ENCODE measurements at regions of chr2 and their contacts with region 1.

Region 1: GRCh38 chr2:85266146-85267041 is 61.4 kb downstream of the TGOLN2 start:
- DNase-seq: peak; percentile 85
- H3K4me3 Mint-ChIP-seq: no peak overlapping the region
- H3K27ac Mint-ChIP-seq: no peak overlapping the region
- H3K4me1 Mint-ChIP-seq: peaks cover 9% of the 10 kb centered on the region
- H3K27me3 Mint-ChIP-seq: no peaks in the 10 kb centered on the region
- CTCF ChIP-seq: peak; percentile 96

Region 2: DNA sequence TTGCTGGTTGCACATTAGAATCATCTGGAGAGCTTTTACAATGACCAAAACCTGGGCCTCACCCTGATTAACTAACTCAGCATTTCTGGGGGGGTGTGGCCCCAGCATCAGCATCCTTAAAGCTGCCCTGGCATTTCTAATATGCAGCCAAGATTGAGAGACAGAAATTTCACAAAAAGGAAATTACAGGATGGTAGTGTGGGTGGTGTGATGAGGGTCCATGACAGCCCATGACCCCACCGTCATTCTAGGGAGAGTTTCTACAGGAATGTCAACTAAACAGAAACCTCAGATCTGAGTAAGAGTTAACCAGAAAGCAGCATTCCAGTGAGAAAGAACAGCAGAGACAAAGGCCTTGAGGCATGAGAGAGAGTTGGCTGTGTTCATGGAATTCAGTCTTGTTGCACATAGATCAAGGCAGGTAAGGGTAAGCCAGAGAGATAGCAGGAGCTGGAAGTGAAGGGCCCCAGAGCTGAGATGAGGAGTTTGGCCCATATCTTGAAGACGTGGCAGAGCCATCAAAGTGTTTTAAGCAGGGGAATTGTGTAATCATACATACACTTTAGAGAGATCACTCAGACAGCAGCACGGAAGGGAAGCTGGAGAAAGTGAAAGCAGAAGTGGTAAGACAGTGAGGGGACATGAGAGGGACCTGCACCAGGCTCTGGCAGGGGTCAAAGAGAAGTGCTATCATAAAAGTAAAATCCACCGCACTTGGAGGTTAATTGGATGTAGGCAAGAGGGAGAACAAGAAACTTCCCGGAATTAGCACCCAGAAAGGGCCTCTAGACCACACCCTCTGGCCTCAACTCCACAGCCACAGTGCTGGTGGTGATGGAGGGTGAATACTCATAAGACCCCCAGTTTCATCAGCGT is 377.8 kb before region 1 on chr2:
- CTCF ChIA-PET with region 1: interaction called, 12 read pairs
- intact Hi-C with region 1: no loop called
- DNase-seq: no peak
- H3K4me3 Mint-ChIP-seq: peak overlapping the region; percentile 10
- H3K27ac Mint-ChIP-seq: peak overlapping the region; percentile 12
- H3K4me1 Mint-ChIP-seq: peaks cover 13% of the 10 kb centered on the region
- H3K27me3 Mint-ChIP-seq: no peaks in the 10 kb centered on the region
- CTCF ChIP-seq: no peak

Region 3: GRCh38 chr2:85255813-85256594 is 10.4 kb before region 1 on chr2:
- CTCF ChIA-PET with region 1: interaction called, 18 read pairs
- intact Hi-C with region 1: no loop called
- DNase-seq: peak; percentile 69
- H3K4me3 Mint-ChIP-seq: peak overlapping the region; percentile 72
- H3K27ac Mint-ChIP-seq: peak overlapping the region; percentile 66
- H3K4me1 Mint-ChIP-seq: peaks cover 40% of the 10 kb centered on the region
- H3K27me3 Mint-ChIP-seq: no peaks in the 10 kb centered on the region
- CTCF ChIP-seq: no peak